ENCODE measurements at regions of chr12 and their contacts with region 1.

Region 1: DNA sequence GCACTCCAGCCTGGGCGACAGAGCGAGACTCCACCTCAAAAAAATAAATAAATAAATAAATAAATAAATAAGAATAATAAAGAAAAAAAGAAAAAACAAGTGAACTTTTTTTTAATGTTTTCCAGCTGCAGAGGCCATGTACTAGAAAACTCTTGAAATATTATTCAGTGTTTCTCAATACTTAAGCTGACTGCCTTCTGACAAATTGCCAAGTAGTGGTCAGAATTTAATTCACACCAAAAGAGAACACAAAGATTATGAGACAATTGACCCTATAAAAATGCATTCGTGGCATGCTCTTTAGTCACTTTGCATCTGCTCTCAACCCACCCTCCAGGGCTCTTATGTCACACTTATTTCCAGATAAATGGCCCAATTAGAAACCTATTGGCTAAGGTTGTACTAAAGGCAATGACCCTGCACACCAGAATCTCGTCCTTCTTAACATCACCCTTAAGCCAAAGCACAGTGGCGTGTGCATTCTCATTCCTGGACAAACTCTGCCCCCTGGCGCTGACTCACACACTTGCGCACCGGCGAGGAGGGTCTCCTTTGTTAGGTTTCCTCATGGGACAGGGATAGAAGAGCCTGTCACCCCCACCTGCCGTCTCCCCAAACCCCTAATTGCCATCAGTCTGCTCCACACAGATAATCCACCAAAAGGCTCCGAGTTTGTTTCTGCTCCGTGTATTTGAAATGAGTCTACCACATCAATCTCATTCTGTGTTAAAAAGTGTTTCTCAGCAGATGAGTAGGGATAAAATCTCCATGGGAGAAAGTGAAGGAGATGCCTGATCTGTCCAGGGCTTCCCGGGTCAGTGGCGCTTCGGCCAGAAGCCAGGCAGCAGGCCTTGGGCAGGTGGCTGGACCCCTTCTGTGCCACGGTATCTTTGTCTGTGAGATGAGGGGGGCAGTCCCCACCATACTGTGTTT is 73.1 kb upstream of the CEP83 start:
- DNase-seq: peak; percentile 45 to 48
- H3K4me3 ChIP-seq: no peak overlapping the region
- H3K27ac ChIP-seq: no peak overlapping the region
- H3K4me1 ChIP-seq: no peaks in the 10 kb centered on the region
- H3K27me3 ChIP-seq: no peaks in the 10 kb centered on the region
- CTCF ChIP-seq: peak; percentile 83

Region 2: DNA sequence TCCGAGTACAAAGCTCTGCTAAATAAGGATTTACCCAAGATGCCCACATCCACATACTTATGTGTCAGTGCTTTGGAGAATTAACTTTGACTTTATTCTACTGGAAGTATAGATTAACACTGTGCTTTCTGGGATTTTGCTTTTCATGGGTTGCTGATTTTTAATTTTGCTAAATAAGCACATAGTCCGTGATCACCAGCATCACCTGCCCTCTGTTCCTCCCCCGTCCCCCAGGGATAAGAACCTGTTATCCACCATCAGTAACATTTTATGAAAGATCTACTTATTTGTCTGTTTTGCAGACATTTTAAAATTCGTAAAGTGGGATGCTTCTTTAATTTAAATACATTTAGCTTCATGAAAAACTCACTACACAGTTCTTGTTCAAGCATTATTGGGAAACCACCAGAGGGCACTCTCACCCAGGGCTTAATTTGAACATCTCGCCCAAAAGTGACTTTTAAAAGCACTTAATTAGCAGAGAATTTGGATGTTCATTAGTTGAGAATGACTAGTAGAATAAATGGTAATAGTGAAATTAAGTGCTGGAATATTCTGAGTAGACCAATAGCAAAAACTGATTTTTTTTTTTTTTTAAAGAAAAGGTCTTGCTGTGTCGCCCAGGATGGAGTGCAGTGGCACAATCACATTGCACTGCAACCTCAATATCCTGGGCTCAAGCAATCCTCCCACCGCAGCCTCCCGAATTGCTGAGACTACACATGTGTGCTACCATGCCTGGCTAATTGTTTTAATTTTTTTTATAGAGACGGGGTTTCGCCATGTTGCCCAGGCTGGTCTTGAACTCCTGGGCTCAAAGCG is 1029.7 kb before region 1 on chr12:
- CTCF ChIA-PET with region 1: no interaction called
- POLR2A ChIA-PET with region 1: no interaction called
- intact Hi-C with region 1: loop called (anchors 5 kb)
- DNase-seq: peak in 1 of 2 experiments; percentile 41
- H3K4me3 ChIP-seq: no peak overlapping the region
- H3K27ac ChIP-seq: no peak overlapping the region
- H3K4me1 ChIP-seq: no peaks in the 10 kb centered on the region
- H3K27me3 ChIP-seq: no peaks in the 10 kb centered on the region
- CTCF ChIP-seq: peak; percentile 92

Region 3: GRCh38 chr12:94133964-94134795 is 398.6 kb before region 1 on chr12:
- CTCF ChIA-PET with region 1: no interaction called
- POLR2A ChIA-PET with region 1: no interaction called
- intact Hi-C with region 1: loop called (anchors 1 kb)
- DNase-seq: peak; percentile 9 to 38
- H3K4me3 ChIP-seq: no peak overlapping the region
- H3K27ac ChIP-seq: no peak overlapping the region
- H3K4me1 ChIP-seq: no peaks in the 10 kb centered on the region
- H3K27me3 ChIP-seq: no peaks in the 10 kb centered on the region
- CTCF ChIP-seq: peak; percentile 88

Region 4: DNA sequence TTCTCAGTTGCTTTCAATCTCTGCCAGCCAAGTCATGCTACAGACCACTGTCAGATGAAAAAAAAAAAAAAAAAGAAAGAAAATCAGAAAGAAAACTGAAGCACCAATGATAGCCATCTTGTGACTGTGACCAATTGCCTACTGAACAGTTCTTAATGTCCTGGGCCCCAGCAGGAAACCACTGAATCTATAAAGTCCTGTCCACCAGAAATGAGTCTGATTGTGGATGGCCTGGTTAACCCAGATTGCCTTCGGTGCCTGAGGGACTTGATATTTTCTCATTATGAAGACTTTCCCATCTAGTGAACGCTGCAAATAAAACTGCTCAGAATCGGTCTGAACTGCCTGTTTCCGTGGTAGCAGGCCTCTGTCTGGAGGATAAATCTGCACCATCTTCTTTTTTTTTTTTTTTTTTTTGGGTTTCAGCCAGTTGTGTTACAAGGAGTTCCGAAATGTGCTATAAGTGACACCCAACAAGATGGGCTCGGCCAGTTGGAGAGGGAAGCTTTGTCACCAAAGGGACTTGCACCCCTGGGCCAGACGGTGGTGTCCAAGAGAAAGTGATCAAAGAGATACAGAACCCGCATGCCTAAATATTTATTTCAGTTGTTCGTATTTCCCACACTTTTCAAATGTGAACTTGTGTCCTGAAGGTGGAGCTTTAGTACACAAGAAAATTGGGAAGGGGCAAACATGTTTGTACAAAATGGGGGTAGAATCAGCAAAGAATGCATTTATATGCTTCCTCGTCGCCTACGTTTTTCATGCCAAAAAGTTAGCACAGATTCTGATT is 387.4 kb before region 1 on chr12:
- CTCF ChIA-PET with region 1: no interaction called
- POLR2A ChIA-PET with region 1: no interaction called
- intact Hi-C with region 1: no loop called
- DNase-seq: no peak
- H3K4me3 ChIP-seq: no peak overlapping the region
- H3K27ac ChIP-seq: no peak overlapping the region
- H3K4me1 ChIP-seq: no peaks in the 10 kb centered on the region
- H3K27me3 ChIP-seq: peaks cover 24% of the 10 kb centered on the region
- CTCF ChIP-seq: no peak; the same call in 1 of the 2 replicates

Region 5: GRCh38 chr12:94333396-94333795 is 199.4 kb before region 1 on chr12:
- CTCF ChIA-PET with region 1: no interaction called
- POLR2A ChIA-PET with region 1: no interaction called
- intact Hi-C with region 1: loop called (anchors 5 kb)
- DNase-seq: no peak
- H3K4me3 ChIP-seq: no peak overlapping the region
- H3K27ac ChIP-seq: no peak overlapping the region
- H3K4me1 ChIP-seq: no peaks in the 10 kb centered on the region
- H3K27me3 ChIP-seq: no peaks in the 10 kb centered on the region
- CTCF ChIP-seq: no peak

Region 6: GRCh38 chr12:94710933-94711332 is 178.2 kb after region 1 on chr12:
- CTCF ChIA-PET with region 1: no interaction called
- POLR2A ChIA-PET with region 1: no interaction called
- intact Hi-C with region 1: no loop called
- DNase-seq: no peak
- H3K4me3 ChIP-seq: no peak overlapping the region
- H3K27ac ChIP-seq: no peak overlapping the region
- H3K4me1 ChIP-seq: no peaks in the 10 kb centered on the region
- H3K27me3 ChIP-seq: no peaks in the 10 kb centered on the region
- CTCF ChIP-seq: peak; percentile 39; the same call in 1 of the 2 replicates

Region 7: GRCh38 chr12:94731733-94732360 is 199.1 kb after region 1 on chr12:
- CTCF ChIA-PET with region 1: interaction called, 13 read pairs
- POLR2A ChIA-PET with region 1: no interaction called
- intact Hi-C with region 1: no loop called
- DNase-seq: no peak
- H3K4me3 ChIP-seq: no peak overlapping the region
- H3K27ac ChIP-seq: no peak overlapping the region
- H3K4me1 ChIP-seq: no peaks in the 10 kb centered on the region
- H3K27me3 ChIP-seq: no peaks in the 10 kb centered on the region
- CTCF ChIP-seq: no peak

Region 8: GRCh38 chr12:95037906-95038305 is 505.1 kb after region 1 on chr12:
- CTCF ChIA-PET with region 1: no interaction called
- POLR2A ChIA-PET with region 1: no interaction called
- intact Hi-C with region 1: no loop called
- DNase-seq: no peak
- H3K4me3 ChIP-seq: no peak overlapping the region
- H3K27ac ChIP-seq: no peak overlapping the region
- H3K4me1 ChIP-seq: no peaks in the 10 kb centered on the region
- H3K27me3 ChIP-seq: no peaks in the 10 kb centered on the region
- CTCF ChIP-seq: no peak